ENCODE measurements at regions of chr22 and their contacts with region 1.

Region 1: DNA sequence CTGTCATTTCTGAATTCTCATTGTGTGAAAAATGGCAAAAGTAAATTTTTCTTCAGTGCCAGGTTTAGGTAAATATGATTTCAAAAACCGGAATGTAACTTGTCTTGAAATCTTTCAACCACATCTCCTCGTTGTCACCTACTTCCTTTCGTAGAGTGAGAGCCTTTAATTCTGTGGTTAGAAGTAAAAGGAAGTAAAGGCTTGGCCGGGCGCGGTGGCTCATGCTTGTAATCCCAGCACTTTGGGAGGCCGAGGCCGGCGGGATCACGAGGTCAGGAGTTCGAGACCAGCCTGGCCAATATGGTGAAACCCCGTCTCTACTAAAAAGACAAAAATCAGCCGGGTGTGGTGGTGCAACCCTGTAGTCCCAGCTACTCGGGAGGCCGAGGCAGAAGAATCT is 29.8 kb downstream of the SGSM3 start:
- DNase-seq: peak; percentile 76
- H3K4me3 Mint-ChIP-seq: peak overlapping the region; percentile 37
- H3K27ac Mint-ChIP-seq: peak overlapping the region; percentile 90
- H3K4me1 Mint-ChIP-seq: peaks cover 58% of the 10 kb centered on the region
- H3K27me3 Mint-ChIP-seq: no peaks in the 10 kb centered on the region

Region 2: GRCh38 chr22:40385036-40385782 is 14.9 kb before region 1 on chr22:
- CTCF ChIA-PET with region 1: interaction called, 11 read pairs
- POLR2A ChIA-PET with region 1: interaction called, 14 read pairs
- DNase-seq: no peak
- H3K4me3 Mint-ChIP-seq: peak overlapping the region; percentile 72
- H3K27ac Mint-ChIP-seq: peak overlapping the region; percentile 79
- H3K4me1 Mint-ChIP-seq: peaks cover 23% of the 10 kb centered on the region
- H3K27me3 Mint-ChIP-seq: no peaks in the 10 kb centered on the region

Region 3: DNA sequence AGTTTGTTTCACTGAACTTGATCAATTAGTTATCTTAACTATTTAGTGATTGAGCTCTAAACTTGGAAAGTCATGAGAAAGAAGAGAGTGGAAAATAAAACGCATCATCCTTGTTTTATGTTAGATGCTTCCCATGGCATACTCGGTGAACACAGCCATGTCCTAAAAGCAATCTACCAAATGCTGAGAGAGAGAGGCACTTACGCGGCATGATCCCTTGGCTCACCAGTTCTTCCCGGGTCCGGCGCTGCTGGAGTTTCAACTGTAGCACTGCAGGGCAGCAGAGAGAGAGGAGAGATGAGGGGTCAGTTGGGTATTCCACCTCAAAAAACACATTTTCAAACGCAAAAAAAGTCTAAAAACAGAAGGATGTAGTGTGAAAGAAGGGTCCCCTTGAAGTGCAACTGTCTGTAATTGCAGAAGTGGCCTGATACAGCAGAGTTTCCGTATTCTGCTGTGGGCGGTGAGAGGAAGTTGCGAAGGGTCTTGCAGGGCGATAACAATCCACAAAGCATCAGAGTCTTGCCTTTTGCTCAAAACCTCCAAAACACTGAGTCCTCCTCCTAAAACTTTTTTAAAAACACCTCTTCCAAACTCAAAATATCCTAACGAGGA is 63.0 kb after region 1 on chr22:
- CTCF ChIA-PET with region 1: no interaction called
- POLR2A ChIA-PET with region 1: no interaction called
- DNase-seq: peak; percentile 62
- H3K4me3 Mint-ChIP-seq: peak overlapping the region; percentile 97
- H3K27ac Mint-ChIP-seq: peak overlapping the region; percentile 96
- H3K4me1 Mint-ChIP-seq: peaks cover 47% of the 10 kb centered on the region
- H3K27me3 Mint-ChIP-seq: no peaks in the 10 kb centered on the region